ENCODE measurements at regions of chr1 and their contacts with region 1.

Region 1: GRCh38 chr1:28956038-28956464 is 41.7 kb downstream of the EPB41 start:
- DNase-seq: peak; percentile 47
- H3K4me3 Mint-ChIP-seq: no peak overlapping the region
- H3K27ac Mint-ChIP-seq: no peak overlapping the region
- H3K4me1 Mint-ChIP-seq: peaks cover 55% of the 10 kb centered on the region
- H3K27me3 Mint-ChIP-seq: no peaks in the 10 kb centered on the region

Region 2: DNA sequence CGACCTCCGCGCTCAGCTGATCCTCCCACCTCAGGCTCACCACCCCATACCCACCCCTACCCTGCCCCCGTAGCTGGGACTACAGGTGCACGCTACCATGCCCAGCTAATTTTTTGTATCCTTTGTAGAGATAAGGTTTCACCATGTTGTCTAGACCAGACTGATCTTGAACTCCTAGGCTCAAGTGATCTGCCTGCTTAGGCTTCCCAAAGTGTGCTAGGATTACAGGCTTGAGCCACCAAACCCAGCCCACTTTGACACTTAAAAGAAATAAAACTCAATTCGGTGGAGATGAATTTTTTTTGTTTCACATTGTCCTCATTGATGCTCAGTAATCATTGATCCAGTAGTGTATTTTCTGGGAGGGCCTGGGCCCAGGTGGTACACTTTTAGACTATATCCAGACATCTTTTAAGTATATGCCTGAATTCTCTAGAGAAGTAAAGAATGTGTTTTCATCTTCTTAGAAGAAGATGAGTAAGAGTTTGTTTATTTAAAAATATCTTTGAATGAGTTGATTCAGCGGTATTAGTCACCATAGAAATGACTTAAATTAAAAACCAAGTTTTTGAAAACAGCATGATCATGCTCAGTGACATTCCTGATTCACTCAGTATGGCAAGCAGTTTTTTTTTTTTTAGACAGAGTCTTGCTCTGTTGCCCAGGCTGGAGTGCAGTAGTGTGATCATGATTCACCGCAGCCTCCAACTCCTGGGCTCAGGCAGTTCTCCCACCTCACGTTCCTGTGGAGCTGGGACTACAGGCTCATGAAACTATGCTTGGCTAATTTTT is 16.1 kb after region 1 on chr1:
- CTCF ChIA-PET with region 1: interaction called, 4 read pairs
- intact Hi-C with region 1: loop called (anchors 2 kb)
- DNase-seq: peak; percentile 26
- H3K4me3 Mint-ChIP-seq: no peak overlapping the region
- H3K27ac Mint-ChIP-seq: peak overlapping the region; percentile 73
- H3K4me1 Mint-ChIP-seq: peaks cover 61% of the 10 kb centered on the region
- H3K27me3 Mint-ChIP-seq: no peaks in the 10 kb centered on the region

Region 3: GRCh38 chr1:29002792-29003191 is 46.7 kb after region 1 on chr1:
- CTCF ChIA-PET with region 1: no interaction called
- intact Hi-C with region 1: loop called (anchors 5 kb)
- DNase-seq: no peak
- H3K4me3 Mint-ChIP-seq: no peak overlapping the region
- H3K27ac Mint-ChIP-seq: no peak overlapping the region
- H3K4me1 Mint-ChIP-seq: peaks cover 37% of the 10 kb centered on the region
- H3K27me3 Mint-ChIP-seq: no peaks in the 10 kb centered on the region

Region 4: GRCh38 chr1:30353637-30354036 is 1397.6 kb after region 1 on chr1:
- CTCF ChIA-PET with region 1: no interaction called
- intact Hi-C with region 1: no loop called
- DNase-seq: no peak
- H3K4me3 Mint-ChIP-seq: no peak overlapping the region
- H3K27ac Mint-ChIP-seq: no peak overlapping the region
- H3K4me1 Mint-ChIP-seq: no peaks in the 10 kb centered on the region
- H3K27me3 Mint-ChIP-seq: peaks cover 15% of the 10 kb centered on the region

Measured in activated naive CD4-positive, alpha-beta T cell treated with anti-CD3 and anti-CD28 coated beads for 36 hours (primary cell).